Activated CD4-positive, alpha-beta T cell treated with anti-CD3 and anti-CD28 coated beads for 36 hours (primary cell): ENCODE measurements at regions of chr18 and their contacts with region 1.

Region 1: DNA sequence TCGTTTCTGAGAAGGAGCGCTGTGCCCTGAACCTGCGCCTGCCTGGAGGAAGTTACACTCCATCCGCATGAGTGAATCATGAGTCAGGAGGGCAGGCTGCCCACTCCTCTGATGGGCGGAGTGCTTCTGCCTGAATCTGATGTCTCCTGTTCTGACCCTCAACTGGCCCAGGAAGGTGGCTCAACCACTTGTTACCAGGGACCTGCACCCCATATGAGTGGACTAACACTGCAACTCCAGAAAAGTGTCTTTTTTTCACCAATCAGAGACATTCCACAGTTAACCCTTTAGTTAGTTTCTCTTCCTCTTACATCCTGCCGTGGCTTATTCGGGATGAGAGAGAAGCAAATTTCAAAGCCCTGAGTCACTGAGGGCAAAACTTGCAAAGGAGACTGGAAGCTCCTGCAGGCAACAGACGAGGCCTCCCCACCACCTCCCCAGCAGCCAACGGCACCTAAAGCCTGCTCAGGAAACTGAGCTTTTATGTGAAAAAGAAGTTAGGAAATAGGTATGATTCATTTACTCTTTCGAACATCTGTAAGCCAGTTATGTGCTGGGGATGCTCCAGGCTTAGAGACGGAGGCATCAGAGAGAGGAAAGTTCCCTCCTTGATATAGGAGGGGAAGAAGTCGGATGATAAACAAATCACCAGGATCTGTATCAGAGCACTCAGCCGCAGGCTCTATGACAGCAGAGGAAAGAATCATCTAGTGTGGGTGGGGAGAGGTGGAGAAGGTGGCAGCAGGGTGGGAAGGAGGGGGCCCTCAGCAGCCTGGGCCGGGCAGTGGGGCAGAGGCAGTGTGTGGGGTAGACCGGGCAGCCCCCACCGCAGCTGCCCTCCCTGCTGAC is 30.9 kb downstream of the MBP start:
- DNase-seq: peak; percentile 79
- ATAC-seq: peak; percentile 49
- H3K4me3 Mint-ChIP-seq: peak overlapping the region; percentile 60
- H3K27ac Mint-ChIP-seq: peak overlapping the region; percentile 98
- H3K4me1 Mint-ChIP-seq: peaks cover 94% of the 10 kb centered on the region
- H3K27me3 Mint-ChIP-seq: no peaks in the 10 kb centered on the region

Region 2: GRCh38 chr18:75869162-75869561 is 1232.5 kb before region 1 on chr18:
- CTCF ChIA-PET with region 1: no interaction called
- POLR2A ChIA-PET with region 1: no interaction called
- intact Hi-C with region 1: no loop called
- DNase-seq: no peak
- ATAC-seq: no peak
- H3K4me3 Mint-ChIP-seq: no peak overlapping the region
- H3K27ac Mint-ChIP-seq: no peak overlapping the region
- H3K4me1 Mint-ChIP-seq: no peaks in the 10 kb centered on the region
- H3K27me3 Mint-ChIP-seq: peaks cover 8% of the 10 kb centered on the region

Region 3: GRCh38 chr18:76822510-76823160 is 279.0 kb before region 1 on chr18 and contains the start of gene ZNF236:
- CTCF ChIA-PET with region 1: no interaction called
- POLR2A ChIA-PET with region 1: no interaction called
- intact Hi-C with region 1: loop called in 1 of 2 experiments (anchors 1 kb)
- DNase-seq: peak; percentile 79
- ATAC-seq: peak; percentile 51
- H3K4me3 Mint-ChIP-seq: peak within 1 kb of the TSS; percentile 91
- H3K27ac Mint-ChIP-seq: peak within 1 kb of the TSS; percentile 89
- H3K4me1 Mint-ChIP-seq: peaks cover 52% of the 10 kb centered on the region
- H3K27me3 Mint-ChIP-seq: no peaks in the 10 kb centered on the region
- total RNA-seq, gene ZNF236: 13.7 to 25.7 TPM

Region 4: DNA sequence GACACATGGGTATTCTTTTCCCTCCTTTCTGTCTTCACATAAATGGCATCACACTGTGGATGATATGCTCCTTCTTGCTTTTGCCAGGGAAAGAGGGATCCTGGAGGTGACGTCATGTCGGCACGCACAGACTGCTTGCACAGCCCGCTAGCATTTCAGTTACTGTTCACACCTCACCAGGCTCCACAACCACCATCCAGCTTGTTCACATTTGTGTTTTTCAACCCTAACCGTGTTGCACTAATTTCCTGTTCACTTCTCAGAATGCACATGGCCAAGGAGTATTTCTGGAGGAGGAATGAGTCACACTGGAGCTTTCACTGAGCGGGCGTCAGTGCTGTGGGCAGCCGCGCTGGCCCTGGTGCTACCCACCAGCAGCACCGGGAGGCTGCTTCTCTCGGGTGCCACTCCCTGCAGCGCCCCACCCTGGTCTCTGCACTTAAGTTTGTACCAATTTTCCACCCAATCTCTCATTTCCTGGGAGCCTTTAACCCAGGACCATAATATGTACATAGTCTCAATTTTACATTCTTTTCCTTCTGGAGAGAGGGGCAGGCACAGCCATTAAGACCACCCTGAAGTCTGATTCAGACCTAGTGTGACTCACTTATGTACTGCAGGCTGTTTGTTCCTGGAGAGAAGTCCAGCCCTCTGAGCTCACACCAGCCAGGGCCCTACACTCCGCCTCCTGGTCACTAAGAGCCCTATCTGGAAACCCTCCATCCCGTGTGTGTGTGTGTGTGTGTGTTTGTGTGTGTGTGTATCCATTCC is 34.2 kb before region 1 on chr18:
- CTCF ChIA-PET with region 1: interaction called, 21 read pairs
- POLR2A ChIA-PET with region 1: interaction called, 48 read pairs
- intact Hi-C with region 1: loop called (anchors 1 kb)
- DNase-seq: peak; percentile 85
- ATAC-seq: peak; percentile 50
- H3K4me3 Mint-ChIP-seq: peak overlapping the region; percentile 48
- H3K27ac Mint-ChIP-seq: peak overlapping the region; percentile 94
- H3K4me1 Mint-ChIP-seq: peaks cover 100% of the 10 kb centered on the region
- H3K27me3 Mint-ChIP-seq: no peaks in the 10 kb centered on the region

Region 5: DNA sequence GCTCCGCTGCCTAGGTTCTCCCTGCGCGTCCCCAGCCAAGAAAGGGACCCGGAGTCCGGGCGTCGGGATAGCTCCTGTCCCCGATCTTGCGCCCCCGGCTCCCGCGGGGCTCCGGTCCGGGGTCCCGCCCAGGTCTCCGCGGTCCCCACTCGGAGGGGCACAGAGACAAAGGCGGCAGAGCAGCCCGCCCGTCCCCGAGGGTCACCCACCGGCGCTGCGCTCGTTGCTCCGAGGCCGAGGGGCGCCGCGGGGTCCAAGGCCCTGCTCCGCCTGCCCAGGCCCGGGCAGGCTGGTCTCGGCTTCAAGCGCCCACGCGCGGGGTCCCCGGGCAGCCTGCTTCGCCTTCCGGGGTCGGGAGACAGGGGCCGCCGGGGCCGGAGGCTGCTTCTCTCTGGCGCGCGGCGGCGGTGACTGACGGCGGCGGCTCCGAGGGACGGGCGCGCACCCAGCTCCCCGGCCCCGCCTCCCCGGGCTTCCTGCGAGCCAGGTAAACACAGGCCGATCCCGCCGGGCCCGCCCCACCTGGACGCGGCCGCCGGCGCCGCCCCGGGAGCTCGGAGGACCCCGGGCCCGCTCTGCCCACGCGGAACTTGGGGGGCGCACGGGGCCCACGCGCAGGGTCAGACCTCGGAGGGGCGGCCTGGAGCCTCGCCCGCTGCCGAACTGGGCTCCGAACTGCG is 30.9 kb after region 1 on chr18 and contains the start of gene MBP:
- CTCF ChIA-PET with region 1: interaction called, 10 read pairs
- POLR2A ChIA-PET with region 1: interaction called, 8 read pairs
- intact Hi-C with region 1: loop called (anchors 1 kb)
- DNase-seq: peak; percentile 83
- ATAC-seq: peak; percentile 59
- H3K4me3 Mint-ChIP-seq: peak within 1 kb of the TSS; percentile 99
- H3K27ac Mint-ChIP-seq: peak within 1 kb of the TSS; percentile 98
- H3K4me1 Mint-ChIP-seq: peaks cover 52% of the 10 kb centered on the region
- H3K27me3 Mint-ChIP-seq: no peaks in the 10 kb centered on the region
- total RNA-seq, gene MBP: 47.0 to 65.7 TPM

Region 6: DNA sequence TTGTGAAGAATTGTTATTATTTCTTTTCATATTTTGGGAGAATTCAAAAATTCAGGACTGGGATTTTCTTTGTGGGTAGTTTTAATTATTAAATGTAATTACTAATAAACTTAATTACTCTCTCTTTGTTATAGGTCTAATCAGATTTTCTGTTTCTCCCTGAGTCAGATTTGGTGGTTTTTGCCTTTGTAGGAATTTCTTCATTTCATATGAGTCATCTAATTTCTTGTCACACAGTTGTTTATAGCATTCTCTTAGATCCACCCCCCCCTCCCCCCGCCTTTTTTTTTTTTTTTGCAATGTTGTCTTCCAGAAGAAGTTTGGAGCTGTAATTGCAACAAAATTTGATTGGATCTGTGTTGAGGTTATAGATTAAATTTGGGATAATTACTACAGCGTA is 122.0 kb after region 1 on chr18:
- CTCF ChIA-PET with region 1: no interaction called
- POLR2A ChIA-PET with region 1: no interaction called
- intact Hi-C with region 1: loop called (anchors 1 to 5 kb)
- DNase-seq: no peak
- ATAC-seq: peak; percentile 70
- H3K4me3 Mint-ChIP-seq: no peak overlapping the region
- H3K27ac Mint-ChIP-seq: no peak overlapping the region
- H3K4me1 Mint-ChIP-seq: peaks cover 15% of the 10 kb centered on the region
- H3K27me3 Mint-ChIP-seq: peaks cover 12% of the 10 kb centered on the region

Region 7: GRCh38 chr18:77249569-77250500 is 148.2 kb after region 1 on chr18 and contains the start of gene GALR1:
- CTCF ChIA-PET with region 1: no interaction called
- POLR2A ChIA-PET with region 1: no interaction called
- intact Hi-C with region 1: no loop called
- DNase-seq: no peak
- ATAC-seq: peak; percentile 19
- H3K4me3 Mint-ChIP-seq: peak within 1 kb of the TSS; percentile 49
- H3K27ac Mint-ChIP-seq: no peak within 1 kb of the TSS
- H3K4me1 Mint-ChIP-seq: peaks cover 12% of the 10 kb centered on the region
- H3K27me3 Mint-ChIP-seq: peaks cover 59% of the 10 kb centered on the region
- total RNA-seq, gene GALR1: not detected